ENCODE measurements at regions of chr9 and their contacts with region 1.

Region 1: DNA sequence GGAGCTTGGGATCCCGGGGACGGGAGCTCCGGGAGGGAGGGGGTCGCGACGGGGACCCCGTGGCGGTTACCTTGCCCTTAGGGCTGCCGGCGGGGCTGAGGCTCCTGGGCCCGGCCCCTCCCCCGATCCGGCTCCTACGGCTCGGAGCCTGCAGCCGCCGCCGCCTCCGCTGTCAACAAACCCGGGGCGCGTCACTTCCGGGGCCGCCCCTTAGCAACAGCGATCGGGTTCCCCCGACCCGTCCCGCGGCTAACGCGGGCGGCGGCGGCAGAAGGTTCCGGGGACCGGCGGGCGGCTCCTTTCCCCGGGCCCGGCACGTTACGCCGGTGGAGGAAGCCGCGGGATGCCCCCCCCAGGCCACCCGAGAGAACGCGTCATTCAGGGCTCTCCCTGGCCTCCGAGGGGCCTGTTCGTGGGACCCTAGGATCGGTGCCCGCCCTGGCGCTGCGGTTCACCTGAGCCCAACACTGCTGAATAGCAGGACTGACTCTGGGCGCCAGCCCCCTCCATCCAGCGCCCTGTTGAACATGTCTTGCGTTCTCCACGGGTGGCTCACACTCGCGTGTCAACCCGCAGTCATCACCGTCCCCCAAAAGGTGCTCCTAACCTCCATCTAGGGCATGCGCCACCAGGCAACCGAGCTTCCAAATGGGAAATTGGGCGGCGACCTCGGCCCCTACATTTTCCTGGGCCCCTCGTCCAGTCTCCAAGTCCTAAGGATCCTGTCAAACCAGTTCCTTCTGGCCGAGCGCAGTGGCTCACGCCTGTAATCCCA is at the start of gene ZER1:
- DNase-seq: peak; percentile 81
- H3K4me3 ChIP-seq: peak within 1 kb of the TSS; percentile 49 to 86 (median 66)
- H3K27ac ChIP-seq: peak within 1 kb of the TSS; percentile 39
- H3K4me1 ChIP-seq: peaks cover 7% of the 10 kb centered on the region
- H3K27me3 ChIP-seq: no peaks in the 10 kb centered on the region
- CTCF ChIP-seq: no peak
- POLR2A ChIP-seq: peak; percentile 66
- total RNA-seq, gene ZER1: 23.0 and 24.9 TPM in 2 replicates

Region 2: DNA sequence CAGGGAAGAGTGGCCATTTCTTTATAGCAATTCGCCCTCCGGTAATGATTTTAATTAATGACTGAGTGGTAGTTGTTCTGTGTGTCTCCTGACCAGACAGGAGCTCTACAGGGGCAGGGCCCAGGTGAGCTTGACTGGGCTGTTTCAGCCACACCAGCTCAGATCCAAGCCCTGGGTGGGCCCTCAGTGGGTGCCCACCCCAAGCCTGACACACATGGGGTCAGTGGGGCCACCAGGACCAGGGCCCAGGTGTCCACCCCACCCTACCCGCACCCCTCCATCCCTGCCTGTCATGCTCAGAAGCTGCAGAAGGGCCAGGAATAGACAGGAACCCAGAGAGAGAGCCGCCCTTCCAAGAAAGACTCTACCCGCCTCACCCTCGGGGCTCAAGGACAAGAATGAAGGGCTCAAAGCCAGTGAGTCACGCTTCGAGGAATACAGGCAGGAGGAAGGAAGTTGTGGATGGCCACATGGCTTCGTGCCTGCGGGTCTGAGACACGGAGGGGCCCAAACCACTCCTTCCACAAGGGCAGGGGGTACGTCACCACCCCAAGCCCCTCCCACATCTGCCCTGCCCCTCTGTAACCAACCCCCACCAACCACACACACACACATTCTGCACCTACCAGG is 1216.0 kb before region 1 on chr9:
- CTCF ChIA-PET with region 1: no interaction called
- POLR2A ChIA-PET with region 1: no interaction called
- dilution Hi-C with region 1: no loop called
- intact Hi-C with region 1: no loop called
- DNase-seq: peak; percentile 93
- H3K4me3 ChIP-seq: no peak overlapping the region
- H3K27ac ChIP-seq: peak overlapping the region; percentile 95
- H3K4me1 ChIP-seq: peaks cover 56% of the 10 kb centered on the region
- H3K27me3 ChIP-seq: no peaks in the 10 kb centered on the region
- CTCF ChIP-seq: no peak
- POLR2A ChIP-seq: peak; percentile 51

Region 3: DNA sequence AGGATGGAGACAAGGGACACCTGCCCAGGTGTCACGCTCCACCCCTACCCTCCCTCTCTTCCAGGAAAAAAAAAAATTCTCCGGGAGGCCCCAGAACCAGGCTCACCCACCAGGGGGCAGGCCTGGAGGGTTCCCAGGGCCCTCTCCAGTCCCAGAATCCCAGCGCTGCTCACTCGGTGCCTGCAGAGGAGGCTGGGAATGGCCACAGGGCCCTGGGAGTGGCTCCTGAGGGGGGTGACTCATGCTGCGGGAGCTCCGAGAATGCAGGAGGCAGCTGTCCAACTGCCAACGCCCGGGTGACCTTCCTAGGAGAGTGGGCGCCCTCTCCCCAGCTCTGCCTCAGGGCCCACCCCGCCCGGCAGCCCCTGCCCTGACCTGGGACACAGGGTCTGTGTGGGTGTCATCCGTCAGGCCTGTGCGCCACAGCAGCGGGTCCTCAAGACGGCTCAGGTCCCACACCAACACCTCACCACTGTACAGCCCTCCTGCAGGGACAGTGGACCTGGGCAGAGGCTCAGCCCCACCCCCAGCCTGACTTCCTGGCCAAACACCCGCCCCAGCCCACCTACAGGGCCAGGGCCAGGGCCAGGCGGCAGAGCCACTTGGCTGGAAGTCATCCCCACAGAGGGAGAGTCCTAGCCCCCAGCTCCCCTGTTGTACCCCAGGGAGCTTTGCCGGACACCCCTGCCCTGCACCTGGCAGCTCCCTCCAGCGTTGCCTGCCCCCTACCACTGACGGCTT is 136.5 kb before region 1 on chr9:
- CTCF ChIA-PET with region 1: no interaction called
- POLR2A ChIA-PET with region 1: no interaction called
- dilution Hi-C with region 1: no loop called
- intact Hi-C with region 1: loop called (anchors 1 kb)
- DNase-seq: peak; percentile 86
- H3K4me3 ChIP-seq: no peak overlapping the region
- H3K27ac ChIP-seq: peak overlapping the region; percentile 64
- H3K4me1 ChIP-seq: peaks cover 11% of the 10 kb centered on the region
- H3K27me3 ChIP-seq: no peaks in the 10 kb centered on the region
- CTCF ChIP-seq: peak; percentile 83 to 86
- POLR2A ChIP-seq: peak; percentile 61

Region 4: DNA sequence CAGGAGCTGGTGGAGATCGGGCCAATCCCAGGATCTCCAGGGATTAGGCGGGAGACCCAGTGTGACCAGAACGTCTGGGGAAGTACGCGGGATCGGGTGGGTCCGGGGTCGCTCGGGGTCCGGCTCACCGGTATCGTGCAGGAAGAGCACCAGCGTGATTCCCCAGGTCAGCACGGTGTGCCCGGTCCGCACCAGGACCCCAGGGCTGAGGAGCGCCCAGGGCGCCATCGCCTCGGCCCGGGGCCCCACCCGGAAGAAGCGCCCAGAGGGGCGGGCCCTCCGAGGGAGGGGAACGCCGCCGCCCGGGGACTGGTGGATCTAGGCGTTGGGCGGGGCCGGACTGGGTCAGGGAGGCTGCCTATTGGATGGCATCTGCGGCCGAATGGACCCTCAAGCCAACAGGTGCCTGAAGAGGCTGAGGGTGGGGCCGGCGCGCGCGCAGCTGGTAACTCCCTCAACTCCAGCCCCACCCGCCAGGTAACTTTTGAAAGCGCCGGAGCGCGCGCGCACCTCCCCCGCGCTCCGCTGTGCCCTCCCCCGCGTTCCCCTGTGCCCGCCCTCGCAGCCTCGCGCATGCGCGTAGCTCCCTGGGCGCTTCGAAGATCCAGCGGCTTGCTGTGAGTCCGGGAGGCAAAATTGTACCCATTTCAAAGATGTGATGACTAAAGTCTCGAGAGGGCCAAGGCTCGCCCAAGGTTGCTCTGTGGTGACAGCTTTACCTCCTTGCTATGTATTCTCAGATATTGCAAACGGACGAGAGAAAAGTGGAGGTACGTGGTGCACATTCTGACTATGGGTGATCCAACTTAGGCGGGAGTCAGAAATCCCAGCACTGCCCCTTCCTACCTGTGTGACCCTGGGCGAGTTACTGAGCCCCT is 47.8 kb before region 1 on chr9 and contains the start of gene ZDHHC12:
- CTCF ChIA-PET with region 1: no interaction called
- POLR2A ChIA-PET with region 1: interaction called, 5 read pairs
- dilution Hi-C with region 1: no loop called
- intact Hi-C with region 1: loop called (anchors 1 kb)
- DNase-seq: peak; percentile 95
- H3K4me3 ChIP-seq: peak within 1 kb of the TSS; percentile 53 to 69 (median 58)
- H3K27ac ChIP-seq: no peak within 1 kb of the TSS
- H3K4me1 ChIP-seq: peaks cover 5% of the 10 kb centered on the region
- H3K27me3 ChIP-seq: no peaks in the 10 kb centered on the region
- CTCF ChIP-seq: no peak
- POLR2A ChIP-seq: peak; percentile 94
- total RNA-seq, gene ZDHHC12: 28.8 and 31.1 TPM in 2 replicates

Region 5: GRCh38 chr9:128786681-128787601 is 15.0 kb after region 1 on chr9 and contains the start of gene TBC1D13:
- CTCF ChIA-PET with region 1: interaction called, 6 read pairs
- POLR2A ChIA-PET with region 1: no interaction called
- dilution Hi-C with region 1: no loop called
- intact Hi-C with region 1: loop called (anchors 1 kb)
- DNase-seq: peak; percentile 82
- H3K4me3 ChIP-seq: peak within 1 kb of the TSS; percentile 50 to 94 (median 77)
- H3K27ac ChIP-seq: no peak within 1 kb of the TSS
- H3K4me1 ChIP-seq: peaks cover 11% of the 10 kb centered on the region
- H3K27me3 ChIP-seq: no peaks in the 10 kb centered on the region
- CTCF ChIP-seq: no peak
- POLR2A ChIP-seq: peak; percentile 66
- total RNA-seq, gene TBC1D13: 34.9 and 35.1 TPM in 2 replicates